ENCODE measurements at regions of chr11 and their contacts with region 1.

Region 1: DNA sequence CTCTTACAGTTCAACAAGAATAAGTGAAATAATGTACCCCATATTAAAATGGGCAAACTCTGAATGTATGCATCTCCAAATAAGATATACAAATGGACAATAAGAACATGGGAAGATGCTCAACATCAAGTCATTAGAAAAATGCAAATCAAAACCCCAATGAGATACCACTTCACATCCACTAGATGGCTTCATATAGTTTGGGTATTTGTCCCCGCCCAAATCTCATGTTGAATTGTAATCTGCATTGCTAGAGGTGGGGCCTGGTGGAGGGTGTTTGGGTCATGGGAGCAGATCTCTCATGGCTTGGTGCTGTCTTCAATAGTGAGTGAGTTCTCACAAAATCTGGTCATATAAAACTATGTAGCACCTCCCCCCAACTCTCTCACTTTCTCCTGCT is 5.7 kb downstream of the MPZL2 start:
- DNase-seq: peak; percentile 50
- ATAC-seq: peak; percentile 76
- H3K4me3 Mint-ChIP-seq: no peak overlapping the region
- H3K27ac Mint-ChIP-seq: no peak overlapping the region
- H3K4me1 Mint-ChIP-seq: peaks cover 62% of the 10 kb centered on the region
- H3K27me3 Mint-ChIP-seq: no peaks in the 10 kb centered on the region
- CTCF ChIP-seq: peak; percentile 58

Region 2: GRCh38 chr11:118290923-118291322 is 32.5 kb after region 1 on chr11:
- CTCF ChIA-PET with region 1: interaction called, 86 read pairs
- POLR2A ChIA-PET with region 1: interaction called, 3 read pairs
- intact Hi-C with region 1: loop called (anchors 5 kb)
- DNase-seq: peak; percentile 74
- ATAC-seq: peak; percentile 71
- H3K4me3 Mint-ChIP-seq: no peak overlapping the region
- H3K27ac Mint-ChIP-seq: no peak overlapping the region
- H3K4me1 Mint-ChIP-seq: peaks cover 32% of the 10 kb centered on the region
- H3K27me3 Mint-ChIP-seq: no peaks in the 10 kb centered on the region
- CTCF ChIP-seq: peak; percentile 48

Measured in activated CD8-positive, alpha-beta T cell treated with anti-CD3 and anti-CD28 coated beads for 36 hours (primary cell).